Sigmoid colon (tissue), 7 donors: ENCODE measurements at regions of chr3 and their contacts with region 1.

Region 1: GRCh38 chr3:58414538-58415197 is 19.0 kb downstream of the PDHB start:
- DNase-seq: peak; percentile 72
- H3K4me3 ChIP-seq: no peak overlapping the region
- H3K27ac ChIP-seq: no peak overlapping the region
- H3K4me1 ChIP-seq: peaks cover 0 to 19% (median 13%) of the 10 kb centered on the region in 4 donors
- H3K27me3 ChIP-seq: no peaks in the 10 kb centered on the region
- CTCF ChIP-seq: peak; percentile 76 to 88 (median 84)
- EP300 ChIP-seq: no peak
- POLR2A ChIP-seq: no peak

Region 2: DNA sequence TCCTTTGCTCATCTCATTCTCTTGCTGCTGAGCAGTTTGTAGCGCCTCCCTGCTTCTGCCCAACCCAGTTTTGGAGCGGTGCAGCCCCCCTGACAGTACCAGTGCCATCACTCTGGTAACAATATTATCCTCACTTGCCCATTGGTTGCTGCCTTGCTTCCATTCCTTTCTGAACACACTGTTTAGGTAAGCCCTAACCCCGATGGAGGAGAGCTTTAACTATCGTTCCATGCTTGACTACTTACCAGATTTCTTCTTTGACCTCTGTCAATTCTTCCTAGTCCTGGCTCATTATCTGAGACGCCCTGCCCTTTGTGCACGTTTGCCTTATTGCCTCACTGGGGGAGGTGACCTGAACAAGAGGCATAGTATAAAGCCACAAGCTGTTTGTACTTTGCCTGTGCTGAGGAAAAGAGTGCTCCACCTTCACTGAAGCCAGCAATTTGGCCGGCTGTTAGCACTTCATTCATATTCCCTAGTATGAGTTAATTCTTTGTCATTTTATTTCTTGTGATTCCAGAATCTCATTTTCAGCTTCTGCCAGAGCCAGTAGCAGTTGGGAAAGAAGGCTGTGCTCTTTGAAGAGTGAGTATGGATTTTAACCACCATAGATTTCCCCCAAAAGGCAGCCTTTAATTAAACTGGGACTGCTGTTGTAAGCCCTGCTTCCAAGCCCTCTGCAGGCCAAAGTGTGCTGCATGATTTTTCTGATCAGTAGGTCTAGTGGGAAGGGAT is 165.1 kb before region 1 on chr3:
- intact Hi-C with region 1: no loop called
- DNase-seq: no peak
- H3K4me3 ChIP-seq: no peak overlapping the region
- H3K27ac ChIP-seq: peak overlapping the region in 1 of 4 donors; percentile 36
- H3K4me1 ChIP-seq: peaks cover 0 to 77% (median 63%) of the 10 kb centered on the region in 4 donors
- H3K27me3 ChIP-seq: no peaks in the 10 kb centered on the region
- CTCF ChIP-seq: no peak
- EP300 ChIP-seq: no peak
- POLR2A ChIP-seq: no peak

Region 3: DNA sequence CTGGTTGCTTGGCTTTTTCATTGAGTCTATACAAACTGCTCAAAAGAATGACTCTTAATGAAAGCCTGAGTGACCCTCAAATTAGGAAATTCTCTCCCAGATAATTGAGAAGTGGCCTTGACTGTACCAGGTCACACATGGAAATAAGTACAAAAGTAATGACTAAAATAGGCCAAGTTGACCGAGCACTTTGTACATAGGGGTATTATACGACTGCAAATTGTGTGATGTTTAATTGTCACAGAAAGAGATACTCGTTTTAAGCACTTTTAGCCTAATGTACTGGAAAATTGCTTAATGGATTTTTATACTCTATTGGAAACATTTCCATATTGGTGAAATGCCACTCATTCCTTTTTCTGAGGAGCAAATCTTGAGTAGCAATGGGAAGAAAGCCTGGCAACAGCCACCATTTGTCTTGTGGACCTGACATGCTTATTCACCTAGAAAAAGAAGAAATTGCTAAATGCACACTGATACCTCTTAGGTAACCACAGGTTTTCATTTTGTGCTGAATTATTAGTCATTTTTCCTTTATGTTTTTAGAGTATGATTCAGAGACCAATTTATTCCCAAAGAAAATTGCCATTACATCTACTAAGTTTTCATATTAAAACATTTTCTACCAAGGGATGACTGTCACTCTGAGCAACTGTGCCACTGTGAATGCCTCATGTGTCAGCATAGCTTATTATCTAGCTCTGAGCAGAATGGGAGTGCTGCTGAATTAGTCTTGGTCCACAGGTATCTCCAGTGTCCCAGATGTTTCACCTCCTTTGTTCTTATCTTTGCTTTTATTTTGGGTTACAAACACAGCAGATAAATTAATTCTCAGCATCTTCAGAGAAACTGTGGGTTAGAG is 90.9 kb before region 1 on chr3:
- intact Hi-C with region 1: loop called (anchors 2 kb)
- DNase-seq: no peak
- H3K4me3 ChIP-seq: no peak overlapping the region
- H3K27ac ChIP-seq: no peak overlapping the region
- H3K4me1 ChIP-seq: peaks cover 0 to 14% (median 11%) of the 10 kb centered on the region in 4 donors
- H3K27me3 ChIP-seq: no peaks in the 10 kb centered on the region
- CTCF ChIP-seq: no peak
- EP300 ChIP-seq: no peak
- POLR2A ChIP-seq: no peak

Region 4: GRCh38 chr3:58349792-58350626 is 64.7 kb before region 1 on chr3:
- intact Hi-C with region 1: no loop called
- DNase-seq: no peak
- H3K4me3 ChIP-seq: no peak overlapping the region
- H3K27ac ChIP-seq: no peak overlapping the region
- H3K4me1 ChIP-seq: peaks cover 0 to 32% (median 23%) of the 10 kb centered on the region in 4 donors
- H3K27me3 ChIP-seq: no peaks in the 10 kb centered on the region
- CTCF ChIP-seq: no peak
- EP300 ChIP-seq: no peak
- POLR2A ChIP-seq: no peak